Vagina (tissue), 2 donors: ENCODE measurements at regions of chr15 and their contacts with region 1.

Region 1: GRCh38 chr15:92020765-92021164 is 167.3 kb downstream of the SLCO3A1 start:
- DNase-seq: no peak
- H3K4me3 ChIP-seq: no peak overlapping the region
- H3K27ac ChIP-seq: no peak overlapping the region
- H3K4me1 ChIP-seq: peaks cover 40% of the 10 kb centered on the region
- H3K27me3 ChIP-seq: no peaks in the 10 kb centered on the region
- CTCF ChIP-seq: no peak
- POLR2A ChIP-seq: no peak

Region 2: DNA sequence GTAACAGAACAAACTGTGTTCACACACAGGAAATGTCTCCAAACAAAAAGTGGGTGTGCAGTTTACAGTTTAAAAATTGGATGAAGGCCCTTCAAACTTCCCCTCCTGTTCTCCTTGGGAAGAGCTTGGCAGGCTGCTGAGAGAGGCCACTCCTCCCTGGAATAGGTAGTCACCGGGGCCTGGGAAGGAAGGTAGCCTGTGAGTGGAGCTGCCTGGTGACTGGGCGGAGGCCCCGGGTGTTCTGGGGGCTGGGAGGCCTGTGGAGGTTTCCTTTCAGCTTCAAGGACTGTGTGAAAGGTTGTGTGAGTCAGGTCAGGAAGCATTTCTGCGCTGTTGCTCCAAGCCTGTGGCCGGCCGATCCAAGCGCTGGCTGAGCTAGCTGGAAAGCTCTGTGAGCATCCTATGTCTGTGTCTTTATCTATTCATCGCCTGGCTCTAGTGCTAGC is 153.2 kb before region 1 on chr15:
- intact Hi-C with region 1: loop called (anchors 10 kb)
- DNase-seq: peak; percentile 95
- H3K4me3 ChIP-seq: no peak overlapping the region
- H3K27ac ChIP-seq: peak overlapping the region; percentile 78
- H3K4me1 ChIP-seq: peaks cover 76% of the 10 kb centered on the region
- H3K27me3 ChIP-seq: no peaks in the 10 kb centered on the region
- CTCF ChIP-seq: no peak
- POLR2A ChIP-seq: no peak

Region 3: DNA sequence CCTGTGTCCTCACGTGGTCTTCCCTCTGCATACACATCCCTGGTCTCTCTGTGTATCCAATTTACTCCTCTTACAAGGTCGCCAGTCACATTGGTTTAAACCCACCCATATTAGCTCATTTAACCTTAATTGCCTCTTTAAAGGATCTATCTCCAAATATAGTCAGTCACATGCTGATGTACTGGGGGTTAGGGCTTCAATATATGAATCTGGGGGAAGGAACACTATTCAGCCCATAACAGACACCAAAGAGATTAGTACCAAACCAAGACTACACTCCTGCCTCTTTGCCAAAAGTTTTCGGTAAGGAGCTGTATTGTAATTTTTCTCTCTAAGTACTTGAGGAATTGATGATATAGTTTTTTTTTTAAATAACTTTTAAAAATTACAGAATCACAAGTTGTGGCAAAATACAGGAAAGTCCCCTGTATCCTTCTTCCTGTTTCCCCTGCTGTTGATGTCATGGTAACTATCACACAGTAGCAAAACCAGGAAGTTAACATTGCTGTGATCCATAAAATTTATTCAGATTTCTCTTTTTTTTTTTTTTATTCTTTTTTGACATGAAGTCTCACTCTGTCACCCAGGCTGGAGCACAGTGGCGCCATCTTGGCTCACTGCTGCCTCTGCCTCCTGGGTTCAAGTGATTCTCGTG is 99.5 kb before region 1 on chr15:
- intact Hi-C with region 1: loop called (anchors 10 kb)
- DNase-seq: no peak
- H3K4me3 ChIP-seq: no peak overlapping the region
- H3K27ac ChIP-seq: peak overlapping the region; percentile 53
- H3K4me1 ChIP-seq: peaks cover 24% of the 10 kb centered on the region
- H3K27me3 ChIP-seq: no peaks in the 10 kb centered on the region
- CTCF ChIP-seq: no peak
- POLR2A ChIP-seq: no peak